HepG2 (cell line): ENCODE measurements at regions of chr2 and their contacts with region 1.

Region 1: DNA sequence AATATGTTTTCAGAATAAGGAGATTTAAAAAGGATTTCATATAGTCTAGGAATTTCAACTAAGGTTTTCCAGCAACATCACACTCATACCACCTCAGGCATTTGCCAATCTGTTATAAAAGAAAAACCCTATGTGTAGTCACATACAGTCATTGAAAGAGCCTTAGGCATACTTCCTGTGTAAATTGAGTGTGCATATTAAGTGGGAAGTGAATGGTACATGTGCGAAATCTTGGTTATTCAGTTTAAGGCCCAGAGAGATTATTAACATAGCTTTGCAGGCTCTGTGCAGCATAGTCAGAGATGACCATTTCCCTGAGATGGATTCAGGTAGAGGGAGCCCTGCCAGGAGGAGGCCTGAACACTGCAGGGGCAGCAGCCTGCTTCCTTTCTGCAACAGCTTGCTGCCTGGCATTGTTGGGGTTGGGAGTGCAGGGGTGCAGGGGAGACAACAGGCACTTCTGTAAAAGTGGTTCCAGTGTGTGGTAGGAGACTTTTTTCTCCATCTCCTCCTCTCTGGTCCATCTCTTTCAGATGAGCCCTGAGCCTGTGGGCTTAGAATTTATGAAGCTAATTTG is 100.1 kb upstream of the OSR1 start:
- DNase-seq: no peak
- ATAC-seq: peak; percentile 36; the same call in 2 of the 3 replicates
- H3K4me3 ChIP-seq: no peak overlapping the region
- H3K27ac ChIP-seq: no peak overlapping the region
- H3K4me1 ChIP-seq: no peaks in the 10 kb centered on the region
- H3K27me3 ChIP-seq: no peaks in the 10 kb centered on the region; a peak in 1 of 5 replicates
- CTCF ChIP-seq: no peak
- EP300 ChIP-seq: no peak
- POLR2A ChIP-seq: no peak
- RAD21 ChIP-seq: no peak

Region 2: GRCh38 chr2:19446341-19446740 is 12.2 kb before region 1 on chr2:
- CTCF ChIA-PET with region 1: no interaction called
- POLR2A ChIA-PET with region 1: no interaction called
- in situ Hi-C with region 1: no loop called
- intact Hi-C with region 1: loop called (anchors 1 kb)
- DNase-seq: no peak
- ATAC-seq: no peak
- H3K4me3 ChIP-seq: no peak overlapping the region
- H3K27ac ChIP-seq: no peak overlapping the region
- H3K4me1 ChIP-seq: no peaks in the 10 kb centered on the region
- H3K27me3 ChIP-seq: peaks cover 0 to 8% of the 10 kb centered on the region in 2 experiments; a peak in 2 of 5 replicates
- CTCF ChIP-seq: no peak
- EP300 ChIP-seq: no peak
- POLR2A ChIP-seq: no peak
- RAD21 ChIP-seq: no peak